GM12878 (cell line): ENCODE measurements at regions of chr6 and their contacts with region 1.

Region 1: GRCh38 chr6:100116411-100117194 is 122.6 kb upstream of the MCHR2 start:
- DNase-seq: no peak
- ATAC-seq: peak; percentile 91
- H3K4me3 ChIP-seq: no peak overlapping the region
- H3K27ac ChIP-seq: no peak overlapping the region
- H3K4me1 ChIP-seq: no peaks in the 10 kb centered on the region
- H3K27me3 ChIP-seq: no peaks in the 10 kb centered on the region
- CTCF ChIP-seq: peak; percentile 59 to 73 (median 63)
- EP300 ChIP-seq: no peak
- POLR2A ChIP-seq: no peak
- RAD21 ChIP-seq: peak; percentile 86

Region 2: GRCh38 chr6:100078509-100078908 is 38.1 kb before region 1 on chr6:
- CTCF ChIA-PET with region 1: no interaction called
- POLR2A ChIA-PET with region 1: no interaction called
- RAD21 ChIA-PET with region 1: no interaction called
- SMC1A ChIA-PET with region 1: no interaction called
- in situ Hi-C with region 1: no loop called
- intact Hi-C with region 1: no loop called
- DNase-seq: no peak
- ATAC-seq: peak; percentile 76
- H3K4me3 ChIP-seq: no peak overlapping the region
- H3K27ac ChIP-seq: no peak overlapping the region
- H3K4me1 ChIP-seq: no peaks in the 10 kb centered on the region
- H3K27me3 ChIP-seq: no peaks in the 10 kb centered on the region
- CTCF ChIP-seq: 0 out of 6 replicates have a peak, but pooled peaks of 1 of the 3 experiments have one; percentile 22
- EP300 ChIP-seq: no peak
- POLR2A ChIP-seq: no peak
- RAD21 ChIP-seq: no peak

Region 3: GRCh38 chr6:100126790-100127484 is 10.3 kb after region 1 on chr6:
- CTCF ChIA-PET with region 1: interaction called, 13 read pairs
- POLR2A ChIA-PET with region 1: no interaction called
- RAD21 ChIA-PET with region 1: no interaction called
- SMC1A ChIA-PET with region 1: interaction called, 10 read pairs
- in situ Hi-C with region 1: no loop called
- intact Hi-C with region 1: no loop called
- DNase-seq: no peak
- ATAC-seq: peak; percentile 94
- H3K4me3 ChIP-seq: no peak overlapping the region
- H3K27ac ChIP-seq: no peak overlapping the region
- H3K4me1 ChIP-seq: no peaks in the 10 kb centered on the region
- H3K27me3 ChIP-seq: no peaks in the 10 kb centered on the region
- CTCF ChIP-seq: no peak
- EP300 ChIP-seq: peak; percentile 46 to 73; a peak in 3 of 4 replicates
- POLR2A ChIP-seq: no peak
- RAD21 ChIP-seq: no peak

Region 4: DNA sequence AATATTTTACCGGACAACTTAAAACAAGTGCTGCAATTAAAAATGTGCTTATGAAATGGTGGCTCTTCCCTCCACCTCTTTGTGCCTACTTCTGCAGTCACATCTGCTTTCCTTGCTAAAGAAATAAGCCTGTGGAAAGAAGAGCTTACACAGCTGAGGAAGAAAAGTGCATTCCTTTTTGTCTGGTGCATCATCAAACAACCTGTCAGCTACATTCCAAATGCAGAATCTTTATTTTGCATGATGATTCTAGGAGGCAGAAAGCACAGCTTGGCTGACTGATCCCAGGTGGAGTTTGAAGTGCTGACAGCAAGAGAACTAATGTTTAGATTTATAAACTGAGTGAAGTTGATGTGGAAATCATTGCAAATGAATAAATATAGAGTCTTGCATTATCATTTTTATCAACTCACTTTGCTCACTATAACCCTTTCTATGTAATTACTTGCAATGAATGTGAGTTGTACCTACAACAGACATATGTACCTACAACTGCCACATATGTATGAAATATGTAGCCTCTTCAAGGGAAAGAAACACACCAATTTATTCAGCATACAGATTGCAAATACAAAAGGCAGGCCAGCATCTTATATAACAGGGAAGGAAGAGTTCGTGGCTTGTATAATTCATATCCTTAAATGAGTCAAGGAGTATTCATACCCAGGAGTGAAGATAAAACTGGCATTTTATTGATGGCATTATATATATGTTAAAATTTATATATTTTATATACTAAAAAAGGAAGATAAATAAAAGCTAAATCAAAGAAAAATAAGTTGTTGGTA is 100.8 kb after region 1 on chr6:
- CTCF ChIA-PET with region 1: no interaction called
- POLR2A ChIA-PET with region 1: no interaction called
- RAD21 ChIA-PET with region 1: no interaction called
- SMC1A ChIA-PET with region 1: no interaction called
- in situ Hi-C with region 1: no loop called
- intact Hi-C with region 1: no loop called
- DNase-seq: no peak
- ATAC-seq: no peak
- H3K4me3 ChIP-seq: no peak overlapping the region
- H3K27ac ChIP-seq: no peak overlapping the region
- H3K4me1 ChIP-seq: no peaks in the 10 kb centered on the region
- H3K27me3 ChIP-seq: no peaks in the 10 kb centered on the region
- CTCF ChIP-seq: no peak
- EP300 ChIP-seq: no peak
- POLR2A ChIP-seq: no peak
- RAD21 ChIP-seq: no peak

Region 5: DNA sequence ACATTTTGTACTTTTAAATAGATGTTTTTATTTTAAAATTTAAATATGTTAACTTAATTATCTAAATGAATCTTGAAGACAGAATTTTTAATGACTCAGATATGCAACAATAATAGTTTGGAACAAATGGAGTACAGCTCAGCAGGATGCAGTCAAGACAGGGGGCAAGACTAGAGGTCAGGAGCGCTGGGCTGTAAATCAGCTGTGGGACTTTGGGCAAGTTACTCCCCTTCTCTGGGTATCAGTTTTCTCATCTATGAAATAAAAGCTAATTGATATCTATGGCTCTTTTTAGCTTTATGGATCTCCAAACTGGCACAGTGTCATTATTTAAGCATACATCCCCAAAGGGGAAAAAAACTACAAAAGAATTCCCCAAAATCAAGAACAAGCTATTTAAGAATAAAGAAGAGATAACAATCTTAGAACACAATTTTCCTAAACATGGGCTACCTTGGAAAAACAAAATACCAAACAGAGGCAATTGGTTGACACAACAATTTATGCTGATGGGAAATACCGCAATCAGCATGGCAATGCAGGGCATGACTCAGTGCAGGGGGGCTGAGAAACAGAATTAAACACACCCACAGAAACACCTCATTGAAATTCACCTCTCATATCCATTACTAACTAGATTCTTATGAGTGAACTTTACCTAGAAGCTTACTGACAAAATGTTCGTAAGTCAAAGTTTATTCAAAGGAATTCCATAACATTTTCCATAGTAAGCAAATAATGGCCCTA is 159.9 kb after region 1 on chr6:
- CTCF ChIA-PET with region 1: interaction called, 5 read pairs
- POLR2A ChIA-PET with region 1: no interaction called
- RAD21 ChIA-PET with region 1: interaction called, 3 read pairs
- SMC1A ChIA-PET with region 1: no interaction called
- in situ Hi-C with region 1: no loop called
- intact Hi-C with region 1: loop called (anchors 5 kb)
- DNase-seq: no peak
- ATAC-seq: no peak
- H3K4me3 ChIP-seq: no peak overlapping the region
- H3K27ac ChIP-seq: no peak overlapping the region
- H3K4me1 ChIP-seq: no peaks in the 10 kb centered on the region
- H3K27me3 ChIP-seq: no peaks in the 10 kb centered on the region
- CTCF ChIP-seq: no peak
- EP300 ChIP-seq: no peak
- POLR2A ChIP-seq: no peak
- RAD21 ChIP-seq: no peak

Region 6: GRCh38 chr6:100472674-100473073 is 356.1 kb after region 1 on chr6:
- CTCF ChIA-PET with region 1: interaction called, 72 read pairs
- POLR2A ChIA-PET with region 1: no interaction called
- RAD21 ChIA-PET with region 1: interaction called, 22 read pairs
- SMC1A ChIA-PET with region 1: interaction called, 38 read pairs
- in situ Hi-C with region 1: loop called (anchors 5 kb)
- intact Hi-C with region 1: no loop called
- DNase-seq: peak; percentile 42
- ATAC-seq: peak; percentile 86
- H3K4me3 ChIP-seq: no peak overlapping the region
- H3K27ac ChIP-seq: no peak overlapping the region
- H3K4me1 ChIP-seq: peaks cover 16% of the 10 kb centered on the region
- H3K27me3 ChIP-seq: peaks cover 2 to 9% of the 10 kb centered on the region in 2 experiments; a peak in 3 of 4 replicates
- CTCF ChIP-seq: no peak
- EP300 ChIP-seq: peak in 1 of 2 experiments; percentile 77; a peak in 2 of 4 replicates
- POLR2A ChIP-seq: no peak
- RAD21 ChIP-seq: no peak

Region 7: GRCh38 chr6:100504786-100505737 is 388.5 kb after region 1 on chr6:
- CTCF ChIA-PET with region 1: interaction called, 12 read pairs
- POLR2A ChIA-PET with region 1: no interaction called
- RAD21 ChIA-PET with region 1: no interaction called
- SMC1A ChIA-PET with region 1: no interaction called
- in situ Hi-C with region 1: no loop called
- intact Hi-C with region 1: no loop called
- DNase-seq: no peak
- ATAC-seq: peak; percentile 50
- H3K4me3 ChIP-seq: no peak overlapping the region
- H3K27ac ChIP-seq: no peak overlapping the region
- H3K4me1 ChIP-seq: no peaks in the 10 kb centered on the region
- H3K27me3 ChIP-seq: no peaks in the 10 kb centered on the region
- CTCF ChIP-seq: no peak
- EP300 ChIP-seq: no peak
- POLR2A ChIP-seq: no peak
- RAD21 ChIP-seq: no peak

Region 8: DNA sequence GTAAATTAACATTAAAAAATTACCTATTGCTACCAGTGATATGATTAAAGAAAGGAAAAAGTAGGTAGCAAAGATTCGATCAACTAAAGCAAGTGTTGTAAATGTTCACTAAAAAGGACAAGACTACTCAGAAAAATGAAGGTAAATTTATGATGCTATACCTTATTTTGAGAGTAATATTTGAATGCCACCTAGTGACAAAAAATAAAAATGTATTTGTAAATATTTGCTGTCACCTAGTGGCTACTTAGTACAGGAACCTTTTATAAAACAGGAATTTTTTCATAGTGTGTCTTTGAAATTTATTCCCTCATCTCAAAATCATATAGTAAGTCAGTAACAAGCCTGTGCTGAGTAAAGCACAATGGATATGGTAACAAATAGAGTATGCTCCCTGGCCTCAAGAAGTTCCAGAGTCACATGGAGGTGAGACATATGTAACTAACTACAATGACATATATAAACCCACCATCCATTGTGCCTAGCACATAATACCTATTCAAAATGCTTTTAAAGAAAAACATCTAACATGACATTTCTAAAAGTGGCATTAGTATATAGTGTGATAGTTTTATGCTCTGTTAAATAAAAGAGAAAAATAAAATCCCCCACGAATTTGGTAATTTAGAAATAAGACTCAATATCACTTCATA is 541.2 kb after region 1 on chr6:
- CTCF ChIA-PET with region 1: interaction called, 20 read pairs
- POLR2A ChIA-PET with region 1: no interaction called
- RAD21 ChIA-PET with region 1: interaction called, 15 read pairs
- SMC1A ChIA-PET with region 1: interaction called, 21 read pairs
- in situ Hi-C with region 1: loop called (anchors 10 kb)
- intact Hi-C with region 1: loop called (anchors 2 kb)
- DNase-seq: no peak
- ATAC-seq: peak; percentile 66
- H3K4me3 ChIP-seq: no peak overlapping the region
- H3K27ac ChIP-seq: no peak overlapping the region
- H3K4me1 ChIP-seq: no peaks in the 10 kb centered on the region
- H3K27me3 ChIP-seq: no peaks in the 10 kb centered on the region
- CTCF ChIP-seq: peak; percentile 43 to 78 (median 45); a peak in 3 of 6 replicates
- EP300 ChIP-seq: no peak
- POLR2A ChIP-seq: no peak
- RAD21 ChIP-seq: peak; percentile 61

Region 9: DNA sequence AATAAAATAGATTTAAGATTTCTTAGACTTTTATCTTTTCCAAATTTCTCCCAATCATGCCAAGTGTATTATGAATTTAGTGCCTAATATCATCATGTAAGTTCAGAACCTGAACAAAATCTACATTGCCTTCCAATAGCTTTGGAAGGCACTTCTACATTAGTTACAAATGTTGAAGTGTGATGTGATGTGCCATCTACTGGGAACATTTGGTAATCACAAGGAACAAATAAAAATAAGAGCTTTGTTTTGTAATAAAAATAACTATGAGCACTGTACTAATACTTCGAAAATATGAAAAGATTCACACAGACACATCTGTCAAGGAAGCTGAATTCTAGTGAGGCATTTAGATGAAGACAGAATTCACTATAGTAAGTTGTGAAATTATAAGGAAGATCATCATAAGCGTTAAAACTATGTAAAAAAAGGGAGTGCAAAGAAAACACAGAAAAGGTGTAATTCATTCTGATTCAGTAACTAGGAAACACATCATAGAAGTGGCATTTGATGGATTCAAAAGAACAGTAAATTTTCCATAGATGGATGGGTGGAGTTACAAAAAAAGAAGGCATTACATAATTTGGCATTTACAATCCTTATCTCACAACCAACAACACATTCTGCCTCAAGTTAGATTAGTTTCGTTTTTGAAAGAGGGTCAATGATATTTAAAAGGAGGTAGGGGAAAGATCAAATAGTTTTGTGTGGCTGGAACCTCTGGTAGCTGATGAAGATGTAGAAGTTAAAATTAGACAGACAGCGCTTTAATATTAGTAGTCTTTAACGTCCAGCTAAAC is 603.5 kb after region 1 on chr6:
- CTCF ChIA-PET with region 1: interaction called, 25 read pairs
- POLR2A ChIA-PET with region 1: no interaction called
- RAD21 ChIA-PET with region 1: interaction called, 10 read pairs
- SMC1A ChIA-PET with region 1: interaction called, 11 read pairs
- in situ Hi-C with region 1: no loop called
- intact Hi-C with region 1: loop called (anchors 5 kb)
- DNase-seq: no peak
- ATAC-seq: peak; percentile 65
- H3K4me3 ChIP-seq: no peak overlapping the region
- H3K27ac ChIP-seq: no peak overlapping the region
- H3K4me1 ChIP-seq: no peaks in the 10 kb centered on the region
- H3K27me3 ChIP-seq: no peaks in the 10 kb centered on the region
- CTCF ChIP-seq: peak; percentile 43 to 48 (median 46); a peak in 4 of 6 replicates
- EP300 ChIP-seq: no peak
- POLR2A ChIP-seq: no peak
- RAD21 ChIP-seq: peak; percentile 34; the same call in 1 of the 2 replicates